Naive thymus-derived CD4-positive, alpha-beta T cell (primary cell): ENCODE measurements at regions of chr6 and their contacts with region 1.

Region 1: GRCh38 chr6:108896111-108896661 is 48.0 kb downstream of the ARMC2 start:
- DNase-seq: no peak
- ATAC-seq: peak; percentile 83
- H3K4me3 ChIP-seq: no peak overlapping the region
- H3K4me3 Mint-ChIP-seq: peak overlapping the region in 2 of 10 donors; percentile 48 to 76
- H3K27ac ChIP-seq: no peak overlapping the region
- H3K27ac Mint-ChIP-seq: peak overlapping the region in 2 of 9 donors; percentile 16 to 88
- H3K4me1 ChIP-seq: peaks cover 0 to 44% of the 10 kb centered on the region in 2 donors
- H3K4me1 Mint-ChIP-seq: peaks cover 11 to 37% (median 16%) of the 10 kb centered on the region in 7 donors
- H3K27me3 ChIP-seq: no peaks in the 10 kb centered on the region
- H3K27me3 Mint-ChIP-seq: peaks cover 0 to 20% (median 0%) of the 10 kb centered on the region in 5 donors

Region 2: DNA sequence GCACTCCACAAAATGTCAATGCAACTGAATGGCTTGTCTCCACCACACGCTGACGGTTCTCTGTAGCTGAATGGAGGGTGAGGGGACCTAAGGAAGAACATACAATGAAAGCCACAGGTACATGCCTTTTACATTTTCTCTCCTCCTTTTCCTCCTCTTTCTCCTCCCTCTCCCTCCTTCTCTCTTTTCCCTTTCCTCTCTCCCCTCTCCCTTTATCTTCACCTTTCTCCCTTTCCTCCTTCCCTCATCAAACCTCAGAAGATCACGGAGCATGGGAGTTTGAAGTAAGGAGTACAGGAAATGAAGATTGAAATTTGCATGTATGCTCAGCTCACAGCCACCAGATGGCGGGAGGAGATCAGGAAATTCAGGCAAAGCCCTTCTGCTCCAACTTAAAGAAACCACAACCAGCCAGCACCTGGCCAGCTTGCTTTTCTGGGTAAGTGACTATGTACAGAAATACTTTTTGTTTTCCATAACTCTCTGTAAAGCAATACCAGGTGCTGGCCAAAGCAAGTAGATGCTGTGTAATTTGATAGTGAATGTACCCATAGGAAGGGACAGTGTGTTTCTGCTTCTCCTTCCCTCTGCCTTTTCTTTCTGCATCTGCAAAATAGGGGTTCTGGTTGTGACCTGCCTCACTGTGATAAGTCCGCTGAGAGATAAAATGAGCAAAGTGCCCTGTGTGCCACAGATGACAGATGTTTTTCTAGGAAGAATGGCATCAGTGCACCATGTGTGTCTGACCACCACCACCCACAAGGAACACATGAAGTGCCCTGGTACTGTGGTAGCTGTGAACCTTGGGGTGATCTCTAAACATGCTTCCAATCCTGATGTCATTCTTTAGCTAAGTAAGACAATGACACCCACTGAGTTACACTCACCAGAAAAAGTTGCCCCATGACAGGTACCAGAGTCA is 354.1 kb before region 1 on chr6:
- CTCF ChIA-PET with region 1: interaction called, 10 read pairs
- POLR2A ChIA-PET with region 1: no interaction called
- intact Hi-C with region 1: loop called (anchors 1 kb)
- DNase-seq: peak in 8 of 9 donors; percentile 41 to 77 (median 70)
- ATAC-seq: peak; percentile 84
- H3K4me3 ChIP-seq: no peak overlapping the region
- H3K4me3 Mint-ChIP-seq: peak overlapping the region in 7 of 10 donors; percentile 2 to 67 (median 31)
- H3K27ac ChIP-seq: no peak overlapping the region
- H3K27ac Mint-ChIP-seq: peak overlapping the region in 1 of 9 donors; percentile 33
- H3K4me1 ChIP-seq: peaks cover 8 to 11% of the 10 kb centered on the region in 2 donors
- H3K4me1 Mint-ChIP-seq: peaks cover 7 to 18% (median 8%) of the 10 kb centered on the region in 7 donors
- H3K27me3 ChIP-seq: no peaks in the 10 kb centered on the region
- H3K27me3 Mint-ChIP-seq: peaks cover 0 to 52% (median 6%) of the 10 kb centered on the region in 5 donors

Region 3: DNA sequence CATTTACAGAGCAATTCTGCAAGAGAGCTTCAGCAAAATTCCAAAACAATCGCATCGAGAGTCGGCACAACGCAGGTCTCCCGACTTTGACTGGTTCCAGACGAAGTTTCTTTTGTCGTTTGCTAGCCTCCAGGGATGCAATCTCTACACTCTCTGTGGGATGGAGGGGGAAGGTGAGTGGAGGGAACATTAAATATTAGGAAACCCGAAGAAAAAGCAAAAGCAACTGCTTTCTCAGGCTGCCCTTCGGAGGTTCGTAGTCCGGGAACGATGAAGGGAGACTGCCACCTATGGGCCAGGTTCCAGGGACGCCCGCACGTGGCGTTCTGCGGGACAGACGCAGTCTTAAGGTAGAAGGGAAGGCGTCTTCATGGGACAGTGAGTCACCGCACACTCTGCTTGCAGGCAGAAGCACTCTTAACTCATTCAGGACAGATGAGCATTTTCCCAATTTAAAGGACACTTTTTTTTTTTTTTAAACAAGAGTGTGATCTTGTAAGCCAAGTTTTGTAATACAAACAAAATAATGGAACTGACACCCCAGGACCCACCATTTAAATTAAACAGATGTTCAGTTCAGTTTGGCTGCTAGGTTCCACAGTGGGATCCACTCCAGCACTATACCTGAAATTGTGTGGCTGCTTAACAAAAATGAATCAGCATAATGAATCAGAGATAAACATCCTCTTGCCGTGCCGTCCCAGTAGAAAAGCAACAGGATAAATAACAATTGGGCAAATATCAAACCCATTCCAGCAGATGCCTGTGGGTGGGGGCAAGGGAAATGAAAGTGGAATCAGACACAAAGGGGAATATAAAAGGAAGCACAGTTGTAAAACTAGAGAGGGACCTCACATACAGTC is 113.8 kb before region 1 on chr6:
- CTCF ChIA-PET with region 1: no interaction called
- POLR2A ChIA-PET with region 1: no interaction called
- intact Hi-C with region 1: loop called (anchors 1 to 2 kb)
- DNase-seq: peak; percentile 56 to 76 (median 71)
- ATAC-seq: peak; percentile 98
- H3K4me3 ChIP-seq: peak overlapping the region; percentile 52
- H3K4me3 Mint-ChIP-seq: peak overlapping the region; percentile 46 to 93 (median 87)
- H3K27ac ChIP-seq: no peak overlapping the region
- H3K27ac Mint-ChIP-seq: peak overlapping the region in 3 of 9 donors; percentile 47 to 64 (median 51)
- H3K4me1 ChIP-seq: no peaks in the 10 kb centered on the region
- H3K4me1 Mint-ChIP-seq: peaks cover 0 to 17% (median 10%) of the 10 kb centered on the region in 7 donors
- H3K27me3 ChIP-seq: no peaks in the 10 kb centered on the region
- H3K27me3 Mint-ChIP-seq: peaks cover 0 to 73% (median 5%) of the 10 kb centered on the region in 5 donors

Region 4: GRCh38 chr6:108848116-108848868 is 47.9 kb before region 1 on chr6 and contains the start of gene ARMC2:
- CTCF ChIA-PET with region 1: no interaction called
- POLR2A ChIA-PET with region 1: no interaction called
- intact Hi-C with region 1: loop called (anchors 1 to 5 kb)
- DNase-seq: peak; percentile 72 to 95 (median 79)
- ATAC-seq: peak; percentile 94
- H3K4me3 ChIP-seq: peak within 1 kb of the TSS; percentile 90
- H3K4me3 Mint-ChIP-seq: peak within 1 kb of the TSS; percentile 75 to 93 (median 88)
- H3K27ac ChIP-seq: peak within 1 kb of the TSS; percentile 69
- H3K27ac Mint-ChIP-seq: peak within 1 kb of the TSS; percentile 72 to 93 (median 85)
- H3K4me1 ChIP-seq: peaks cover 6 to 13% of the 10 kb centered on the region in 2 donors
- H3K4me1 Mint-ChIP-seq: peaks cover 11 to 39% (median 29%) of the 10 kb centered on the region in 7 donors
- H3K27me3 ChIP-seq: no peaks in the 10 kb centered on the region
- H3K27me3 Mint-ChIP-seq: peaks cover 0 to 36% (median 0%) of the 10 kb centered on the region in 5 donors
- total RNA-seq, gene ARMC2: 6.2 to 12.7 (median 7.9) TPM

Region 5: DNA sequence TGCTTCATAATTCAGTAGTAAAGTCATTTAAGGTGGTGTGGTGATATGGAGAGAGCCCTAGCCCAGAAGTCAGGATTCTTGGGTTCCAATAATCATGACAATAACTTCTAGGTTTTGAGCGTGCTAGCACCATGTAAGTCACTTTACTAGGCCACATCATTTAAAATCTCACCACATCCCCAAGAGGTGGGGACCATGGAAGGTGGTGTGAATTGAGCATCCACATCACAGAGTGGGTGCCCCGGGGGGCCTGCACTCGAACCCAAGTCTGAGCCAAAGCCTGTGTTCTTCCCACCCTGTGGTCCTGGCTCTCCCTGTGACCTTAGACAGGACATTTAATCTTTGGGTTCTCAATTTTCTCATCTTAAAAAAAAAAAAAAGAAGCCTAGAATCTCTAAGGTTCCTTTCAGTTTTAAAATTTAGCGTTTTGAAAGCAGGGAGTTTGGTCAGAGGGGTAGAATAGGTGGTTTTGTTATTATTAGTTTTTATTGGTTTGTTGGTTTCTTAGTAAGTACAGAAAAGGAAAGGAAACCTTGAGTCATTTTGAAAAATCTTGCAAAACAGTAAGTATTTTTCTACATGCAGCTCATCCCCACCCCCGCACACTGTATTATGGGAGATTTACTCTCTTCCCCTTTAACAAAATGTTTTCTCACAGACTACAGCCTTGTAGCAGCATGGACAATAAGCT is 21.6 kb before region 1 on chr6:
- CTCF ChIA-PET with region 1: no interaction called
- POLR2A ChIA-PET with region 1: no interaction called
- intact Hi-C with region 1: loop called in 1 of 2 experiments (anchors 1 kb)
- DNase-seq: peak in 1 of 9 donors; percentile 66
- ATAC-seq: peak; percentile 79
- H3K4me3 ChIP-seq: no peak overlapping the region
- H3K4me3 Mint-ChIP-seq: peak overlapping the region in 8 of 10 donors; percentile 25 to 79 (median 43)
- H3K27ac ChIP-seq: peak overlapping the region; percentile 22
- H3K27ac Mint-ChIP-seq: peak overlapping the region in 7 of 9 donors; percentile 6 to 92 (median 53)
- H3K4me1 ChIP-seq: peaks cover 9 to 41% of the 10 kb centered on the region in 2 donors
- H3K4me1 Mint-ChIP-seq: peaks cover 25 to 63% (median 31%) of the 10 kb centered on the region in 7 donors
- H3K27me3 ChIP-seq: no peaks in the 10 kb centered on the region
- H3K27me3 Mint-ChIP-seq: peaks cover 0 to 29% (median 0%) of the 10 kb centered on the region in 5 donors

Region 6: DNA sequence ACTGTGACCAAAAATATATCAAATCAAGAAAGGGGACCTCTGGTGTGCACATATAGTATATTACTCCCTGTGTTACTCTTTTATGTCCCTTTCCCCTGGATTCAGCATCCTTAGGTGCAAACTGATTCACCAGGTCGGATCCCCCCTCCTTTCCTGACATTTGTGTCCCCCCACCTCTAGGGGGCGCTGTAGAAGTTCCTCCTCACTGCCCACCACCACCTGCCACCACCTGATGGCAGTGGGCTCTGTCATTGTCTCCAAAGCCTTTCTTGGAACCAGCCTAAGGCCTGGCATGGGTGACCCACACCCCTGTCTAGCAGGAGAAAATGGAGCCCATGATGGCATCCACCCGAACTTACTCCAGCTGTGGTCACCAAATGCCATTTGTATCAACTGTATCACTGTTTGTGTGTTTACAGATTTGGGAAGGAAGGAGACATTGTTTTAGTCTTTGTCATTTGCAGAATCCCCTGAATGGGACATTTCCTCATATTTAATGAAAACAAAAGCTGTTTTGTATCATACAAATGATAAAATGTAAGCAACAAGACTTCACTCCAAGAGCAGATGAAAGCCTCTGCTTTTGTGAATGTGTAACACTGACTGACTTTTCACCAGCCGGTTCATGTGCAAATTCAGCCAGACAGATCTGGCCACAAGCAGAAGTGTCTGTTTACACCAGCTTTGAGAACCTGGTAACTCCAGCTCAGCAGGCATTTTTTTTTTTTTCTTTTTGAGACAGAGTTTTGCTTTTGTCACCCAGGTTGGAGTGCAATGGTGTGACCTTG is 18.2 kb after region 1 on chr6:
- CTCF ChIA-PET with region 1: interaction called, 5 read pairs
- POLR2A ChIA-PET with region 1: interaction called, 3 read pairs
- intact Hi-C with region 1: loop called in 1 of 2 experiments (anchors 2 kb)
- DNase-seq: peak in 8 of 9 donors; percentile 6 to 44 (median 35)
- ATAC-seq: peak; percentile 58
- H3K4me3 ChIP-seq: no peak overlapping the region
- H3K4me3 Mint-ChIP-seq: no peak overlapping the region
- H3K27ac ChIP-seq: no peak overlapping the region
- H3K27ac Mint-ChIP-seq: peak overlapping the region in 2 of 9 donors; percentile 28 to 31
- H3K4me1 ChIP-seq: no peaks in the 10 kb centered on the region
- H3K4me1 Mint-ChIP-seq: peaks cover 0 to 9% (median 3%) of the 10 kb centered on the region in 7 donors
- H3K27me3 ChIP-seq: no peaks in the 10 kb centered on the region
- H3K27me3 Mint-ChIP-seq: peaks cover 0 to 47% (median 0%) of the 10 kb centered on the region in 5 donors

Region 7: GRCh38 chr6:108998485-108998884 is 102.3 kb after region 1 on chr6:
- CTCF ChIA-PET with region 1: no interaction called
- POLR2A ChIA-PET with region 1: no interaction called
- intact Hi-C with region 1: no loop called
- DNase-seq: no peak
- ATAC-seq: no peak
- H3K4me3 ChIP-seq: no peak overlapping the region
- H3K4me3 Mint-ChIP-seq: no peak overlapping the region
- H3K27ac ChIP-seq: no peak overlapping the region
- H3K27ac Mint-ChIP-seq: no peak overlapping the region
- H3K4me1 ChIP-seq: peaks cover under 1% of the 10 kb centered on the region in 2 donors
- H3K4me1 Mint-ChIP-seq: peaks cover 0 to 28% (median 21%) of the 10 kb centered on the region in 7 donors
- H3K27me3 ChIP-seq: no peaks in the 10 kb centered on the region
- H3K27me3 Mint-ChIP-seq: no peaks in the 10 kb centered on the region

Region 8: GRCh38 chr6:109073344-109074132 is 177.4 kb after region 1 on chr6:
- CTCF ChIA-PET with region 1: interaction called, 3 read pairs
- POLR2A ChIA-PET with region 1: no interaction called
- intact Hi-C with region 1: loop called (anchors 1 to 2 kb)
- DNase-seq: peak in 7 of 9 donors; percentile 56 to 78 (median 72)
- ATAC-seq: peak; percentile 85
- H3K4me3 ChIP-seq: no peak overlapping the region
- H3K4me3 Mint-ChIP-seq: peak overlapping the region in 8 of 10 donors; percentile 1 to 64 (median 24)
- H3K27ac ChIP-seq: no peak overlapping the region
- H3K27ac Mint-ChIP-seq: peak overlapping the region in 4 of 9 donors; percentile 1 to 44 (median 4)
- H3K4me1 ChIP-seq: peaks cover 18 to 39% of the 10 kb centered on the region in 2 donors
- H3K4me1 Mint-ChIP-seq: peaks cover 15 to 37% (median 22%) of the 10 kb centered on the region in 7 donors
- H3K27me3 ChIP-seq: no peaks in the 10 kb centered on the region
- H3K27me3 Mint-ChIP-seq: peaks cover 0 to 12% (median 0%) of the 10 kb centered on the region in 5 donors